ENCODE measurements at regions of chr3 and their contacts with region 1.

Region 1: DNA sequence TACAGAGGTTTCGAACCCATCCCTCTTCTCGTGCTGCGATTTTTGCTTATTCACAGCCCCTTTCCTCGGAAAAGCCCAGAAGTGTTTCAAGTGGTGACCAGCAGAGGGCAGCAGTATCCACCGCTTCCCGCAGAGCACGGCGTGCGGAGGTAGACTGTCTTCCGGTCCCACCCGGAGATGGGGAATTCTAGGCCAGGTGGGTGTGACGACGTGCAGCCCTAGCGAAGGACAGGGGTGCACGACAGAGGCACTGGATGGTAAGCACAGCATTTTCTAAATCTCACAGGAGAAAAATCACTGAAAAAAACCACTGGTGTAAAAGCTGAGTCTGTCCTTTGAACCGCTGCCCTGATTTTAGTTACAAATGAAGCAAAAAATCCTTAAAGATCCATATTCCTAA is 7.4 kb upstream of the PSMD6 start:
- DNase-seq: peak; percentile 66 to 81 (median 71)
- H3K4me3 ChIP-seq: peak overlapping the region; percentile 43
- H3K4me3 Mint-ChIP-seq: peak overlapping the region; percentile 44 to 89 (median 85)
- H3K27ac ChIP-seq: no peak overlapping the region
- H3K27ac Mint-ChIP-seq: peak overlapping the region in 7 of 8 donors; percentile 2 to 86 (median 76)
- H3K4me1 ChIP-seq: peaks cover 5% of the 10 kb centered on the region
- H3K4me1 Mint-ChIP-seq: peaks cover 6 to 7% (median 7%) of the 10 kb centered on the region in 3 donors
- H3K27me3 ChIP-seq: peaks cover 6% of the 10 kb centered on the region
- H3K27me3 Mint-ChIP-seq: peaks cover 13 to 24% of the 10 kb centered on the region in 2 donors

Region 2: DNA sequence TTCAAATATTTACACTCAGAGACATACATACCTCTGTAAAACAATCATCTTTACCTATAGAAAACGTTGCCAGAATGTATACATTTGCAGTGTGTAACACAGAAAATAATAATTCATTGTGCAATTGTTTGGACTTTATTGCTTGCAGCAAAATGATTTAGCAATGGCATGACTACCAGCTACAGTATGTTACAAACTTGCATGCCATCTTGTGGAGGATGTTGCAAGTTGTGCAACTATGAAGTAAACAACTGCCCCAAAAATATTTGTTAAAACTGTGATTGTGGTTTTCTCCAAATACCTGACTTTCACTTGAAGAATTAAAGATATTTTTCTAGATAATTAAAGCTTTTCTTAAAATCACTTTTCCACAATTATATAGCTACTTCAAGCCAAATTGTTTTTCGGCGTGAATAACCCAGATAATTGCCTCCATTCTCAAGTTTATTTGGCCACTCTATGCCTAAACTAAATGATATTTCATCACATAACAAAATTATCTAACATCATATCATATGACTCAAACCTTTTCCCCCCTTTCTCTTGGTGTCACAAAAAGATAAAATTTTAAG is 238.7 kb before region 1 on chr3:
- CTCF ChIA-PET with region 1: no interaction called
- POLR2A ChIA-PET with region 1: no interaction called
- DNase-seq: no peak
- H3K4me3 ChIP-seq: no peak overlapping the region
- H3K4me3 Mint-ChIP-seq: no peak overlapping the region
- H3K27ac ChIP-seq: no peak overlapping the region
- H3K27ac Mint-ChIP-seq: no peak overlapping the region
- H3K4me1 ChIP-seq: no peaks in the 10 kb centered on the region
- H3K4me1 Mint-ChIP-seq: no peaks in the 10 kb centered on the region
- H3K27me3 ChIP-seq: no peaks in the 10 kb centered on the region
- H3K27me3 Mint-ChIP-seq: peaks cover 0 to 17% of the 10 kb centered on the region in 2 donors

Region 3: DNA sequence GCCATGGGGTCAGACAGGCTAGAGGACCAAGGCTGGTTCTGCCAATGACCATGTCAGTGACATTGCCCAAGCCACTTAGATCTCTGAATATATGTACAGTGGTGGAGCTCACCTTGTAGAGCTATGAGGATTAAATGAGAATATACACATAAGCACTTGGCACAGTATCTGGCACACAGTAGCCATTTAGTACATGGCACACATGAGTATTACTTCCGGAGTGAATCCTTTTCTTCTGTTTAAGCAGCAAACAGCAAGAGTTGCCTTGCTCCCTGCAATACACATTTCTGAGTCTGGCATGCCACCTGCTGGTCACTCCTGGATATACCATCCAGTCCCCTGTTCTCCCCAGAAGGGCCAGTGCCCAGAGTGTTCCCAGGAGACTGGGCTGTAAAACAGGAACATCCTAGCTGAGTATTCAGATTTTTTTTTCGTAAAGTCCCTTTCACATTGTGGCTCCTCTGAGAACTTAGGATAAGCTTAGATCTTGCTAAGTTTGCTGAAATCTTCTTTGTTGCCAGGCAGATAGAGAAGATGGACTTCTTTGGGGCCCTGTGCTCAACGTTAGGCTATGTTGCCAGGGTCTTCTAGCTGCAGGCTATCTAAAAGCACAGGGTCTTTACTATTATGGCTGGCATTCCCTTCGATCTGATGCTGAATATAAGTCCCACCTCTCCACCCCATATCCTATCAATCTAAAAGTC is 453.7 kb after region 1 on chr3:
- CTCF ChIA-PET with region 1: interaction called, 16 read pairs
- POLR2A ChIA-PET with region 1: no interaction called
- DNase-seq: peak; percentile 13 to 63 (median 24)
- H3K4me3 ChIP-seq: no peak overlapping the region
- H3K4me3 Mint-ChIP-seq: no peak overlapping the region
- H3K27ac ChIP-seq: no peak overlapping the region
- H3K27ac Mint-ChIP-seq: peak overlapping the region in 1 of 8 donors; percentile 73
- H3K4me1 ChIP-seq: no peaks in the 10 kb centered on the region
- H3K4me1 Mint-ChIP-seq: peaks cover 0 to 4% (median 0%) of the 10 kb centered on the region in 3 donors
- H3K27me3 ChIP-seq: no peaks in the 10 kb centered on the region
- H3K27me3 Mint-ChIP-seq: peaks cover 20 to 21% of the 10 kb centered on the region in 2 donors

Measured in CD8-positive, alpha-beta memory T cell (primary cell).